Heart left ventricle (tissue), 16 donors: ENCODE measurements at regions of chr22 and their contacts with region 1.

Region 1: GRCh38 chr22:43889860-43890253 is 2.0 kb downstream of the PNPLA5 start:
- DNase-seq: no peak
- ATAC-seq: no peak
- H3K4me3 ChIP-seq: no peak overlapping the region
- H3K27ac ChIP-seq: no peak overlapping the region
- H3K4me1 ChIP-seq: peaks cover 0 to 13% (median 0%) of the 10 kb centered on the region in 12 donors
- H3K27me3 ChIP-seq: peaks cover 15 to 77% (median 44%) of the 10 kb centered on the region in 9 donors
- CTCF ChIP-seq: no peak
- POLR2A ChIP-seq: no peak

Region 2: GRCh38 chr22:43944670-43945430 is 55.0 kb after region 1 on chr22:
- intact Hi-C with region 1: loop called in 1 of 10 experiments (anchors 5 kb)
- DNase-seq: no peak
- ATAC-seq: peak in 1 of 4 donors; percentile 18
- H3K4me3 ChIP-seq: no peak overlapping the region
- H3K27ac ChIP-seq: no peak overlapping the region
- H3K4me1 ChIP-seq: no peaks in the 10 kb centered on the region
- H3K27me3 ChIP-seq: peaks cover 0 to 7% (median 0%) of the 10 kb centered on the region in 9 donors
- CTCF ChIP-seq: no peak
- POLR2A ChIP-seq: no peak